ENCODE measurements at regions of chr1 and their contacts with region 1.

Region 1: GRCh38 chr1:147494998-147495580 is 46.2 kb upstream of the BCL9 start:
- DNase-seq: peak; percentile 81

Region 2: DNA sequence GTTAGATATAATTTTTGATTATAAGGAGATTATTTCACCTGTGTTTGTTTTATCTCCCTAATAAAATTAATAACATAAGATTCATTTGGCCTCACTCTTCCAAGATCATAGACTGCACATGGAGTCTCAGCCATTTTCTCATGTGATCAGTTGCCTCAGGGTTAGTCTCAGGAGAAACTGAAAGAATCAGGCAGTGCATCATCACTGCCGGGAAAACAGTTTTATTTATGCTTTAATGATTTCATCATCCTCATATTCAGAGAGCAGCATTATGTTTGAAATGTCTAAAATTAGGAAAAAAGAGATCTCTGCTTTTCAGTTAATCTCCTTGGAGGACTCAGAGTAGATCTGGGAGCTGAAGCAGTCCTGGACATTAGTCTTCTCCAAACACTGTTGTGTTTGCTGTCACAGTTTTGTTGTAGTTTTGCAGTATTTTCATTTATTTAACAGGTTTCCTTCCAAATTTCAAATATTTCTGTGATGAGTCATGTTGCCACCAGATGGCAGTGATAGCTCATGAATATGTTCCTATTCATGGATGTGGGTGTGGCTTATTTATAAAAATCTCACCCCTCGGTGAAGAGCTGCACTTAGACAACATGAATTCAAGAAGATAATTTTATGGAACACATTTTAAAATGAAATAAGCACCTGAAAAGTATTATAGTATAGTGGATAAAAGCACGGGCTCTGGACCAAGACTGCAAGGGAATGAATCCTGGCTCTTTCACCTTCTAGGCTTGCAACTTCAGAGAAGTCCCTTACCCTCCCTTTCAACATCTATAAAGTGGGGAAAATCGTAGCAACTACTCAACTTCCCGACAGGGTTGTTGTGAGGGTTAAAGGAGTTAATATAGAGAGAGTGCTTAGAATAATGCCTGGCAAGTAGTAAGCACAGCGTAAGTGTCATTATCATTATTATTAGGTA is 221.4 kb before region 1 on chr1:
- intact Hi-C with region 1: no loop called
- DNase-seq: no peak

Region 3: DNA sequence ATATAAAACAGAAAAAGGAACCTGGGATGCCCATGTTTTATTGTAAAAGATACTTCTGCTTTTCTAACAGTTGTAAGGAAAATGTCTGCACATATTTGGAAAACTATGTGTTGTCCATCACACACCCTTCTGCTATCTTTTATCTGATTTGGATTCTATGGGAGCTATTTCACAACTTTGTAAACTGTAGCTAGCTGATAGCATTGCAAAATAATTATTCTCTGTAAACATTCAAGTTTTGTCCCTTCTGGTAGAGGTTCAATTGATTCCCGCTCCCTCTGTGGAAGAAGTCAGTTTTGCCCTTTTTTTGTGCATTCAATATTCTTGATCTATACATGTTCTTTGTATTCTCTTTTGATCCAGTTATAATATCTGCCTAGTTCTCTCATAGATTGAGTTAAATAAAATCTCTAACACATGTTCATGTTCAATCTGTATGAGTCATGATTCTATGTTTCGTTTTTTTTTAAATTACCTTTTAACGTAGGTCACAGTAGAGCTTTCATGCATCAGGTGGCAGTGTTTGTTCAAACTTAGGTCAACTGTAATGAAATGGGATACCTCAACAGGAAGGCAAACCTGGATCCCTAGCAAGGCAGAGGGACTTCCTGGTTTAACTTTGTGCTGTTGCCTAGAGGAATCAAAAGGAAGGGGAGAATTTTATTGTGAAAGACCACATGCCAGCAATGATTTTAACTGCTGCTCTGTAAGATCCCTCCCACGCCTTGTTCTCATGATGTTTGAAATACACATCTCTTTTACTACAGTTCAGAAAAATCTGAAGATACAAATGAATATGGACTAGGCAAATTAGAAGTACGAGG is 20.2 kb after region 1 on chr1:
- intact Hi-C with region 1: loop called (anchors 2 kb)
- DNase-seq: no peak

Region 4: GRCh38 chr1:147541672-147542568 is 46.8 kb after region 1 on chr1:
- intact Hi-C with region 1: loop called (anchors 5 kb)
- DNase-seq: no peak

Region 5: DNA sequence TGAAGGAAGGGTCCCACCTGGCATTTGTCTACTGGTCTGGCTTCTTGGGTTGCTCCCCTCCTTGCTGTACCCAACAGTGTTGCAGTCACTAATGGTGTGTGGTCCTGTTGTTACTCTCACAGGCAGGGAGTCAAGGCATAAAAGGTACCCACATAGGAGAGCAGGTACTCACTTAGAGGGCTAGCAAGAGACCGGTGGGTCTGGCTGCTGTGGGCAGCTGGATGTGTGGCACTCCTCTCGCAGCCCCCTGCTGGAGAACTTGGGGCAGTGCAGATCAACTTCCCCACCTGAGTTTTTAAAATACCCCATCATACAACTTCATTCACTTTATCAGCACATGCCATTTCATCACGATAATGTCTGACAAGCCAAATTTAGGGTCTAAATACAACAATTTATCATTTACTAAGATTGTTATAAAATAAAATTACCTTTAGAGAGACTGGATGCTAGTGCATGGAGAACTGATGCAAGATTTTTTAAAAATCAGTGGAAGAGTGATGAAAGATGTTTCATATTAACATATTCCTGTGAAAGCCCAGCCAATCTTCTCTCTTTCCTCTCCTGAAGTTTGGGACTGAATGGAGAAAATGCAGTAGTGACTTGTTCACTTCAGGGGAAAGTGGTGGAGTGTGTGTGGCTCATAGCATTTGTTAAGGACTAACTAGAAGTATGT is 132.5 kb after region 1 on chr1:
- intact Hi-C with region 1: loop called (anchors 1 kb)
- DNase-seq: peak; percentile 78

Region 6: GRCh38 chr1:147640553-147641165 is 145.6 kb after region 1 on chr1:
- intact Hi-C with region 1: loop called (anchors 2 kb)
- DNase-seq: peak; percentile 85

Region 7: GRCh38 chr1:147890177-147890790 is 395.2 kb after region 1 on chr1:
- intact Hi-C with region 1: loop called (anchors 5 kb)
- DNase-seq: peak; percentile 85

Measured in cardiac septum (tissue), 1 donor.